ENCODE measurements at regions of chr4 and their contacts with region 1.

Region 1: GRCh38 chr4:179130122-179130714 is 1688.0 kb upstream of the AGA start:
- DNase-seq: peak; percentile 34
- ATAC-seq: peak; percentile 69
- H3K4me3 ChIP-seq: no peak overlapping the region
- H3K27ac ChIP-seq: no peak overlapping the region
- H3K4me1 ChIP-seq: no peaks in the 10 kb centered on the region
- H3K27me3 ChIP-seq: no peaks in the 10 kb centered on the region
- CTCF ChIP-seq: no peak; a peak in 1 of 6 replicates
- EP300 ChIP-seq: peak; percentile 89 to 90
- POLR2A ChIP-seq: no peak
- RAD21 ChIP-seq: no peak

Region 2: GRCh38 chr4:179607003-179607402 is 476.8 kb after region 1 on chr4:
- CTCF ChIA-PET with region 1: no interaction called
- POLR2A ChIA-PET with region 1: no interaction called
- RAD21 ChIA-PET with region 1: no interaction called
- SMC1A ChIA-PET with region 1: no interaction called
- in situ Hi-C with region 1: no loop called
- intact Hi-C with region 1: loop called (anchors 2 kb)
- DNase-seq: peak; percentile 24
- ATAC-seq: peak; percentile 91
- H3K4me3 ChIP-seq: no peak overlapping the region
- H3K27ac ChIP-seq: no peak overlapping the region
- H3K4me1 ChIP-seq: no peaks in the 10 kb centered on the region
- H3K27me3 ChIP-seq: no peaks in the 10 kb centered on the region
- CTCF ChIP-seq: no peak
- EP300 ChIP-seq: peak; percentile 75 to 79; a peak in 3 of 4 replicates
- POLR2A ChIP-seq: no peak
- RAD21 ChIP-seq: no peak